ENCODE measurements at regions of chr13 and their contacts with region 1.

Region 1: GRCh38 chr13:60431108-60431700 is 34.2 kb downstream of the TDRD3 start:
- DNase-seq: peak; percentile 55
- H3K4me3 Mint-ChIP-seq: no peak overlapping the region
- H3K27ac Mint-ChIP-seq: no peak overlapping the region
- H3K4me1 Mint-ChIP-seq: no peaks in the 10 kb centered on the region
- H3K27me3 Mint-ChIP-seq: no peaks in the 10 kb centered on the region
- CTCF ChIP-seq: peak; percentile 82

Region 2: DNA sequence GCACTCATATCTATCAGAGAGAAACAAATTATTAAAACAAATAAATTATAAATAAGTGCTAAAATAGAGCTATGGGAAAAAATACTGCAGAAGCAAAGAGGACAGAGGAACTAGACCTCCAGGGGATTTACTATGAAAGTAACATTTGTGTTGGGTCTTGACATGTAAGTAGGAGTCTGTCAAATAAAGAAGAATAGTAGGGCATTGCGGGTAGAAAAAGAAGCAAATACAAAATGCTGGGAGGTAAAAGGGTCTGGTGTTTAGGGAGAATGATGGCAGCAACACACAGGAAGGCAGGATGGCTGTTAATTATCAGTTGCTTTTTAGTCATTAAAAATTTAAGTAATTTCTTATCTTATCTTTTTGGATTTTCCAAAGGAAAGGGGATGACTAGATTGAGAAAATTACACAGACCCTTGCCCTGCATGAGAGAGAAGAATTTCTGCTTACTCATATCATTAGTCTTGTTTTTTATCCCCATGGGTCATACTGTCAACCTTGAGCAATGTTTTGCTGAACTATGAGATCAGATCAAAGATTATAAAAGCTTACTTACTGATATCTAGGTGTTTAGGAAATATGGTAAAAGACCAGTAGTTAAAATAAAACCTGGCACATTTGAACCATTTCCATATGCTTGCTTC is 740.2 kb before region 1 on chr13:
- CTCF ChIA-PET with region 1: no interaction called
- POLR2A ChIA-PET with region 1: no interaction called
- intact Hi-C with region 1: loop called (anchors 5 kb)
- DNase-seq: no peak
- H3K4me3 Mint-ChIP-seq: no peak overlapping the region
- H3K27ac Mint-ChIP-seq: no peak overlapping the region
- H3K4me1 Mint-ChIP-seq: no peaks in the 10 kb centered on the region
- H3K27me3 Mint-ChIP-seq: no peaks in the 10 kb centered on the region
- CTCF ChIP-seq: no peak

Region 3: DNA sequence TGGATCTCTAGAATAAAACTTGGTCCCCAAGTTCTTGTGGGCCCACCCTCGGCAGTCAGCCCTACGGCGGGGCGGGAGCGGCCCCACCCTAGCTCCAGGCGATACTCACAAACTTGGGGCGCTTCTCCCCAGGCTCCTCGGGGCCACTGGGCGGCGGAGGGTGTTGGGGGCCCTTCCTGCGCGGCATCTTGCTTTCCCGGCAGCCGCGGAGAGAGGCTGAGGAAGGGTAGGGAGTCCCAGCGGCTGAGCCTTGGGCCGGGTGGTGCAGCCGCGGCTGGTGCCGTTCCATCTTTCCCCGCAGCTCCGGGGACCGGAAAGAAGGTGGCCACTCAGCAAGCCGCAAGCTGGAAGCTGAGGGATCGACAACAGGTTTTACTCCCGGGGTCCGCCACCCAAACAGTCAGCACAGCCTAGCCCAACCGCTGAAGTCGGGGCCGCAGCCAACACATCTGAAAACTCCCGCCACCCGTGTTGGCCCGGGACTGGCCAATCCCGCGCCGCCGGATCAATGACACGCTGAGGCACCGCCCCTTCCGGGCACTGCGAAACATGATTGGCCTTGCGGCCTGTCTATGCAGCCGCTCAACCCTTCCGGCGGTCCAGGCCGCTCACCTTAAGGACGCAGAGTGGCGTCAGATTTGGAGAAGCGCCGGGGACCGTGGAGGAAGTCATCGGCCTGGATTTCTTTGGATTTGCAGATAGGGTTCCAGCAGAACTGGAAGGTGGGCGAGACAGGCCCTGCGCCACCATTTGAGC is 267.5 kb before region 1 on chr13 and contains the start of gene DIAPH3:
- CTCF ChIA-PET with region 1: no interaction called
- POLR2A ChIA-PET with region 1: no interaction called
- intact Hi-C with region 1: loop called (anchors 10 kb)
- DNase-seq: peak; percentile 96
- H3K4me3 Mint-ChIP-seq: peak within 1 kb of the TSS; percentile 94
- H3K27ac Mint-ChIP-seq: peak within 1 kb of the TSS; percentile 77
- H3K4me1 Mint-ChIP-seq: peaks cover 39% of the 10 kb centered on the region
- H3K27me3 Mint-ChIP-seq: no peaks in the 10 kb centered on the region
- CTCF ChIP-seq: no peak
- total RNA-seq, gene DIAPH3: 21.2 and 34.7 TPM in 2 replicates

Region 4: GRCh38 chr13:60335531-60335930 is 95.7 kb before region 1 on chr13:
- CTCF ChIA-PET with region 1: interaction called, 6 read pairs
- POLR2A ChIA-PET with region 1: no interaction called
- intact Hi-C with region 1: loop called (anchors 1 kb)
- DNase-seq: peak; percentile 16
- H3K4me3 Mint-ChIP-seq: no peak overlapping the region
- H3K27ac Mint-ChIP-seq: no peak overlapping the region
- H3K4me1 Mint-ChIP-seq: peaks cover 5% of the 10 kb centered on the region
- H3K27me3 Mint-ChIP-seq: peaks cover 76% of the 10 kb centered on the region
- CTCF ChIP-seq: peak; percentile 41

Region 5: DNA sequence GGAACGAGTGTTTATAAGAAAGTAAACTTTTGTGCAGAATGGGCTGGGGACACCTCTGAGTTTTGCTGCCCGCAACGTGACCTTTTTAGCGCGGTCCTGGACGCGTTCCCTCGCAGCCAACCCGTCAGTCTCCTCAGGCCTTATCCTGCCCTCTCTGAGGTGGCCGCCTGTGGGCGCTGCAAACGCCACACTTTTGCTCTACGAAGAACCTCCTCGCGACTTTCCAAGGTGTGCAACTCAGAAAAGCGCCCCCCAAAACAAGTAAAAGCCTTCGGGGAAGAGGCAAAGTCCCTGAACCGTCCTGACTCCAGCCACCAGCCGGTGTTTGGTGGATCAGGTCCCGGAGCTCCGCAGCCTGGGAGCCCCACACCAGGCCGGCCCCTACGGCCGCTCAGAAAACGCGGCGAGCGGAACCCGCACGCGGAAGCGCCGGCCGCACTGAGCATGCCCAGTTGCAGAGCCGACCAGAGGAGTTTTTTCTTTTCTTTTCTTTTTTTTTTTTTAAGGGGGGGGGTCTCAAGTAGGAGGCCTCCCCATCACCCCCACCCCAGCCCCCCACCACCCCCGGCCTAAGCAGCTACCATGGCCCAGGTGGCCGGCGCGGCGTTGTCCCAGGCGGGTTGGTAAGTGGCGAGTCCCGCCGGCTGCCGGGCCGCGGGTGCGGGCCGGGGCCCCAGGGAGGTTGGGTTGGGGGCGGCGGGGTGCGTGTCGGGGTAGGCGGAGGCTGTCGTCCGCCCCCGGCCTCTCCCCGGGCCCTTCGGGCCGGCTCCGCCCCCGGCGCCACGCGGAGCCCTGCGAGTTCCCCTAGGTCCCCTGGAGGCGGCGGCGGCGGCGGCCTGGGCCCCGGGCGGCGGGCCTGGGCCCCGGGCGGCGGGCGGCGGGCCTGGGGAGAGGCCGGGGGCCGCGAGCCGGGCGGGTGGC is 34.2 kb before region 1 on chr13 and contains the start of gene TDRD3:
- CTCF ChIA-PET with region 1: interaction called, 5 read pairs
- POLR2A ChIA-PET with region 1: interaction called, 6 read pairs
- intact Hi-C with region 1: loop called (anchors 1 kb)
- DNase-seq: peak; percentile 87
- H3K4me3 Mint-ChIP-seq: peak within 1 kb of the TSS; percentile 80
- H3K27ac Mint-ChIP-seq: peak within 1 kb of the TSS; percentile 88
- H3K4me1 Mint-ChIP-seq: peaks cover 18% of the 10 kb centered on the region
- H3K27me3 Mint-ChIP-seq: no peaks in the 10 kb centered on the region
- CTCF ChIP-seq: peak; percentile 51
- total RNA-seq, gene TDRD3: 13.6 and 21.4 TPM in 2 replicates